PC-3 (cell line): ENCODE measurements at regions of chr1 and their contacts with region 1.

Region 1: DNA sequence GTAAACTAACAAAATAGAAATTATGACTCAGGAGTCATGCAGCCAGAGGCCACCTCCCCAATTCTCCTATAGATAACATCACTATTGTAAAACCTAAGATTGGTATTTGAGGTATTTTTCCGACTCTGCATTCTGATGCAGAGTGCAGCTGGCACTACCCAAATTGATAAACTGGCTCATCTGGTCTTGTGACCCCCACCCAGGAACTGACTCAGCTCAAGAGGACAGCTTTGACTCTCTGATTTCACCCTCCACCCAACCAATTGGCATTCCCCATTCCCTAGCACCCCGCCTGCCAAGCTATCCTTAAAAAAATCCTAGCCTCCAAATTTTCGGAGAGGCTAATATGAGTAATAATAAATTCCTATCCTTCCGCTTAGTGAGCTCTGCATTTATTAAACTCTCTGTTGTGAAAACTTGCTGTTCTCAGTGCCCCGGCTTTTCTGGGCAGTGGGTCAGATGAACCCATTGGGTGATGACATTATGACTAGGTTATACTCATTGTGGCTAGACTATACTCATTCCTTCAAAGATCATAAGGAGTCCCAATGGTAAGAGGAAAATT is 39.4 kb upstream of the EPS15 start:
- DNase-seq: peak; percentile 99
- ATAC-seq: peak; percentile 88
- H3K4me3 ChIP-seq: peak overlapping the region; percentile 34
- H3K27ac ChIP-seq: peak overlapping the region; percentile 97
- H3K4me1 ChIP-seq: peaks cover 52% of the 10 kb centered on the region
- H3K27me3 ChIP-seq: no peaks in the 10 kb centered on the region
- CTCF ChIP-seq: no peak

Region 2: GRCh38 chr1:51445351-51446090 is 112.9 kb before region 1 on chr1:
- CTCF ChIA-PET with region 1: no interaction called
- POLR2A ChIA-PET with region 1: no interaction called
- intact Hi-C with region 1: no loop called
- DNase-seq: no peak
- ATAC-seq: no peak
- H3K4me3 ChIP-seq: no peak overlapping the region
- H3K27ac ChIP-seq: no peak overlapping the region
- H3K4me1 ChIP-seq: no peaks in the 10 kb centered on the region
- H3K27me3 ChIP-seq: no peaks in the 10 kb centered on the region
- CTCF ChIP-seq: no peak

Region 3: DNA sequence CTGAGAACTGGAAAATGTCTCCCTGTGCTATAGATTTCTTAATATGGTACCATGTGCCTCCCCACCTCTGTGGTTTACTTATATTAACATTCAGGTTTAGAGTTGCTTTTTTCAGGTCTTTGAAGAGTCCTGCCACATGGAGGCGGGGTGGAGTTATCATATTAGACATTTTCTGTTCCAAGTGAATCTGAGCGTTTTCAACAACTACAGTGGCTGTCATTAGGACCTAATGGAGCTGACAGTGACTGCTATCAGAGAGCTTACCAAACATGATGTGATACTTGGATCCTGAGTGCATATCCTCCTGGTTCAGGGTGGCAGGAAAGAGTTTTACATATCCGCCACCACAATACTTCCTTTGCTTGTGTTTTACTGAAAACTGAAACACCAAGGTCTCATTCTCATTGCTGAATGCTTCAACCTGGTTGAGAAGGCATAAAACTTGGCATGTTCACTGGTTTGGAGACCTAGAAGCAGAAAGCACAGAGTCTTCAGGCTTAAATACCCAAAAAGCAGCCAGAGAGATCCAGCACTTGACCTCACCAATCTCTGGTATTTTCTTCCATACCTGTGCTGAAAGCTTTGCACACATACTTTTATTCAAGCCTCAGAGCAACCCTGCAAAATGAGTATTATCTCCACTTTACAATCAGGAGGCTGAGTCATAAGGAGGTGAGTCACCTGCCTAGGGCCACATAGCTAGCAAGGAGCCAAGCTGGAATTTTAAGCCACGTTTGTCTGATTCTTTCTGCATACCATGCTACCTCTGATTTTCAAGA is 11.0 kb after region 1 on chr1:
- CTCF ChIA-PET with region 1: interaction called, 3 read pairs
- POLR2A ChIA-PET with region 1: interaction called, 5 read pairs
- intact Hi-C with region 1: loop called (anchors 1 kb)
- DNase-seq: peak; percentile 98
- ATAC-seq: peak; percentile 69
- H3K4me3 ChIP-seq: peak overlapping the region; percentile 37
- H3K27ac ChIP-seq: peak overlapping the region; percentile 97
- H3K4me1 ChIP-seq: peaks cover 58% of the 10 kb centered on the region
- H3K27me3 ChIP-seq: no peaks in the 10 kb centered on the region
- CTCF ChIP-seq: peak; percentile 63

Region 4: DNA sequence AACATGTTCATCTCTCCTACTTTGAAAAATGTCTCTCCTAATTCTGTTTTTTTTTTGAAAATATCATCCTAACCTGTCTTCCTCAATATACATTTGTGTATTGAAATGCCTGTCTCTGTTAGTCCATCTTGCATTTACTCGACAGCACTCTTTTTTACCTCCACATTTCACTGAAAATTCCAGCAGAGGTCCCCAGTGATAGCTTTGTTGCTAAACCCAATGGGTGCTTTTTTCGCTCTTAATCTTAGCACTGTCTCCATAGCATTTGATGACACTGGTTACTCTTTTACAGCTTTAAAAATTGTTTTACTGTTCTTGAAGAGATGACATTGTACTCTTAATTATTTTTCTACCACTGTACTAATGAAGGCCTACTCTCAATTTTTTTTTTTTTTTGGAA is 69.2 kb after region 1 on chr1:
- CTCF ChIA-PET with region 1: no interaction called
- POLR2A ChIA-PET with region 1: no interaction called
- intact Hi-C with region 1: loop called (anchors 1 kb)
- DNase-seq: peak; percentile 59
- ATAC-seq: no peak
- H3K4me3 ChIP-seq: no peak overlapping the region
- H3K27ac ChIP-seq: no peak overlapping the region
- H3K4me1 ChIP-seq: peaks cover 31% of the 10 kb centered on the region
- H3K27me3 ChIP-seq: no peaks in the 10 kb centered on the region
- CTCF ChIP-seq: peak; percentile 65

Region 5: GRCh38 chr1:51956528-51957509 is 398.4 kb after region 1 on chr1:
- CTCF ChIA-PET with region 1: no interaction called
- POLR2A ChIA-PET with region 1: no interaction called
- intact Hi-C with region 1: no loop called
- DNase-seq: no peak
- ATAC-seq: peak; percentile 65
- H3K4me3 ChIP-seq: no peak overlapping the region
- H3K27ac ChIP-seq: no peak overlapping the region
- H3K4me1 ChIP-seq: no peaks in the 10 kb centered on the region; the same call in 1 of the 2 replicates
- H3K27me3 ChIP-seq: no peaks in the 10 kb centered on the region
- CTCF ChIP-seq: no peak